HepG2 (cell line): ENCODE measurements at regions of chr4 and their contacts with region 1.

Region 1: GRCh38 chr4:87422104-87423052 is at the start of gene NUDT9:
- DNase-seq: peak; percentile 80
- ATAC-seq: peak; percentile 82
- H3K4me3 ChIP-seq: peak within 1 kb of the TSS; percentile 79 to 91 (median 90)
- H3K27ac ChIP-seq: peak within 1 kb of the TSS; percentile 95
- H3K4me1 ChIP-seq: peaks cover 72% of the 10 kb centered on the region
- H3K27me3 ChIP-seq: no peaks in the 10 kb centered on the region; a peak in 1 of 5 replicates
- CTCF ChIP-seq: 0 out of 2 replicates have a peak, but pooled peaks have one; percentile 10
- EP300 ChIP-seq: 0 out of 4 replicates have a peak, but pooled peaks of 1 of the 2 experiments have one; percentile 3
- POLR2A ChIP-seq: peak; percentile 70 to 77
- RAD21 ChIP-seq: 0 out of 2 replicates have a peak, but pooled peaks have one; percentile 30
- total RNA-seq, gene NUDT9: 9.7 and 10.4 TPM in 2 replicates

Region 2: GRCh38 chr4:87192145-87192919 is 230.0 kb before region 1 on chr4:
- CTCF ChIA-PET with region 1: no interaction called
- POLR2A ChIA-PET with region 1: no interaction called
- in situ Hi-C with region 1: no loop called
- intact Hi-C with region 1: no loop called
- DNase-seq: no peak
- ATAC-seq: no peak
- H3K4me3 ChIP-seq: no peak overlapping the region
- H3K27ac ChIP-seq: no peak overlapping the region
- H3K4me1 ChIP-seq: peaks cover 10% of the 10 kb centered on the region; the same call in 1 of the 2 replicates
- H3K27me3 ChIP-seq: no peaks in the 10 kb centered on the region
- CTCF ChIP-seq: no peak
- EP300 ChIP-seq: no peak
- POLR2A ChIP-seq: no peak
- RAD21 ChIP-seq: no peak

Region 3: DNA sequence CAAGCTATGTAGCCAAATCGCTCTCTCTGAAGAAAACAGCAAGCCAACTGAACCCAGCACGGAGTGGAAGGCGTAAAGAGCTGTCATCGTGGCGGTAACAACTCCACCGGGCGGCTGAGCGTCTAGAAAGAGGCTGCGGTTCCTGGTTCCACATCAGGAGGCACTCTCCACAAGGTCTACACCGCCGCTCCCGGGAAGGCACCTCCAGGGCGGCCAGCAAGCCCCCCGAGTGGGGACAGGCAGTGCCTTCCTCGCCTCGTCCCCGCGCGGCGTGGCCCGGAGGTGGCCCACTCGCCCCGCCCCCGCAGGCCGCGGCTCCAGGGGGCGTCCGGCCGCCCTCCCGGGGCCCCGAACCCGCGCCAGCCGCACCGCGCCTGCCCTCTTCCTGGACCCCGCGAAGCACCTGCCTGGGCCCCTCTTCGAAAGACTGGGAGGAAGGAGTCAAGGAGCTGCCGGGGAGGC is 202.7 kb before region 1 on chr4:
- CTCF ChIA-PET with region 1: no interaction called
- POLR2A ChIA-PET with region 1: no interaction called
- in situ Hi-C with region 1: no loop called
- intact Hi-C with region 1: no loop called
- DNase-seq: peak; percentile 11
- ATAC-seq: peak; percentile 39; the same call in 2 of the 3 replicates
- H3K4me3 ChIP-seq: peak overlapping the region; percentile 94 to 100 (median 94)
- H3K27ac ChIP-seq: peak overlapping the region; percentile 93
- H3K4me1 ChIP-seq: peaks cover 18% of the 10 kb centered on the region
- H3K27me3 ChIP-seq: peaks cover 0 to 2% of the 10 kb centered on the region in 2 experiments; a peak in 1 of 5 replicates
- CTCF ChIP-seq: no peak
- EP300 ChIP-seq: no peak
- POLR2A ChIP-seq: no peak
- RAD21 ChIP-seq: no peak

Region 4: GRCh38 chr4:87375719-87376291 is 46.6 kb before region 1 on chr4:
- CTCF ChIA-PET with region 1: no interaction called
- POLR2A ChIA-PET with region 1: interaction called, 4 read pairs
- in situ Hi-C with region 1: no loop called
- intact Hi-C with region 1: loop called (anchors 10 kb)
- DNase-seq: peak; percentile 61
- ATAC-seq: peak; percentile 75
- H3K4me3 ChIP-seq: no peak overlapping the region
- H3K27ac ChIP-seq: no peak overlapping the region
- H3K4me1 ChIP-seq: peaks cover 15% of the 10 kb centered on the region
- H3K27me3 ChIP-seq: no peaks in the 10 kb centered on the region
- CTCF ChIP-seq: peak; percentile 75
- EP300 ChIP-seq: peak in 1 of 2 experiments; percentile 20; a peak in 1 of 4 replicates
- POLR2A ChIP-seq: no peak
- RAD21 ChIP-seq: peak; percentile 76

Region 5: GRCh38 chr4:87390891-87391575 is 31.3 kb before region 1 on chr4 and contains the start of gene HSD17B11:
- CTCF ChIA-PET with region 1: no interaction called
- POLR2A ChIA-PET with region 1: interaction called, 172 read pairs
- in situ Hi-C with region 1: no loop called
- intact Hi-C with region 1: loop called (anchors 1 kb)
- DNase-seq: peak; percentile 96
- ATAC-seq: peak; percentile 97
- H3K4me3 ChIP-seq: peak within 1 kb of the TSS; percentile 81 to 93 (median 88)
- H3K27ac ChIP-seq: peak within 1 kb of the TSS; percentile 87
- H3K4me1 ChIP-seq: peaks cover 30% of the 10 kb centered on the region
- H3K27me3 ChIP-seq: no peaks in the 10 kb centered on the region; a peak in 1 of 5 replicates
- CTCF ChIP-seq: peak; percentile 44
- EP300 ChIP-seq: peak in 1 of 2 experiments; percentile 78; a peak in 2 of 4 replicates
- POLR2A ChIP-seq: peak; percentile 76 to 88
- RAD21 ChIP-seq: 0 out of 2 replicates have a peak, but pooled peaks have one; percentile 42
- total RNA-seq, gene HSD17B11: 120 and 158 TPM in 2 replicates

Region 6: GRCh38 chr4:87409420-87409939 is 12.9 kb before region 1 on chr4:
- CTCF ChIA-PET with region 1: no interaction called
- POLR2A ChIA-PET with region 1: interaction called, 21 read pairs
- in situ Hi-C with region 1: no loop called
- intact Hi-C with region 1: loop called (anchors 1 kb)
- DNase-seq: peak; percentile 89
- ATAC-seq: peak; percentile 92
- H3K4me3 ChIP-seq: peak overlapping the region; percentile 5 to 19 (median 7); a peak in 4 of 6 replicates
- H3K27ac ChIP-seq: peak overlapping the region; percentile 33
- H3K4me1 ChIP-seq: peaks cover 40% of the 10 kb centered on the region
- H3K27me3 ChIP-seq: no peaks in the 10 kb centered on the region
- CTCF ChIP-seq: no peak
- EP300 ChIP-seq: peak in 1 of 2 experiments; percentile 85; a peak in 2 of 4 replicates
- POLR2A ChIP-seq: no peak
- RAD21 ChIP-seq: no peak

Region 7: GRCh38 chr4:87451537-87451936 is 29.2 kb after region 1 on chr4:
- CTCF ChIA-PET with region 1: no interaction called
- POLR2A ChIA-PET with region 1: interaction called, 6 read pairs
- in situ Hi-C with region 1: no loop called
- intact Hi-C with region 1: loop called (anchors 1 kb)
- DNase-seq: peak; percentile 2
- ATAC-seq: no peak
- H3K4me3 ChIP-seq: no peak overlapping the region
- H3K27ac ChIP-seq: no peak overlapping the region
- H3K4me1 ChIP-seq: peaks cover 9% of the 10 kb centered on the region
- H3K27me3 ChIP-seq: no peaks in the 10 kb centered on the region
- CTCF ChIP-seq: no peak
- EP300 ChIP-seq: no peak
- POLR2A ChIP-seq: no peak
- RAD21 ChIP-seq: no peak

Region 8: GRCh38 chr4:87758270-87758669 is 335.9 kb after region 1 on chr4:
- CTCF ChIA-PET with region 1: no interaction called
- POLR2A ChIA-PET with region 1: no interaction called
- in situ Hi-C with region 1: no loop called
- intact Hi-C with region 1: no loop called
- DNase-seq: no peak
- ATAC-seq: no peak
- H3K4me3 ChIP-seq: no peak overlapping the region
- H3K27ac ChIP-seq: no peak overlapping the region
- H3K4me1 ChIP-seq: no peaks in the 10 kb centered on the region
- H3K27me3 ChIP-seq: peaks cover 0 to 4% of the 10 kb centered on the region in 2 experiments; a peak in 2 of 5 replicates
- CTCF ChIP-seq: no peak
- EP300 ChIP-seq: no peak
- POLR2A ChIP-seq: no peak
- RAD21 ChIP-seq: no peak